ENCODE measurements at regions of chr12 and their contacts with region 1.

Region 1: DNA sequence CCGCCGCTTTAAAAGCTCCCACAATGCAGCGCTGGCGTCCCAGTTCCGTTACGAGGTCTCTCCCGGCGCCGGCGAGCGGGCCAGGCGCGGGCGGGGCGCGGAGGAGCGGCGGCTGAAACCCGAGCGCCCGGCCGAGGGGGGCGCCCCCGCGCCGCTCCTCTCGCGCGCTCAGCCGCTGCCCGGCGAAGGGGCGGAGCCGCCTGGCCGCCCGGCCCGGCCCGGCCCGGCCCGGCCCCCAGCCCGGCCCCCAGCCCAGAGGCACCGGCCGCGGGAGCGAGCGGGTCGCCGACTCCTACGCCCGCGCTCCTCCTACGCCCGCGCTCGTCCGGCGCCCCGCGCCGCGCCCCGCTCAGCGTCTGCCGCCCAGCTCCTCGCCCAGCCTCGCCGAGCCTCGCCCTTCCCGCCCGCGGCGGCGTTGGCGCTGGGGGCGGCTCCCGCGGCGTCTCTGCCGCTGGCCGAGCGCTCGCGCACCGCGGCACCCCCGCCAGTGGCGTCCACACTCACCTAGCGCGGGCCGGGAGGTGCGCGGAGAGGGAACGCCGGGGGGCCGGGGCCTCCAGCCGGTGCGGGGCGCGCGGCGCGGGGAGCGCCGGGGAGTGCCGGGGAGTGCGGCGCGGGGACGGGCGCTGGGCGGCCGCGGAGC is at the start of gene RASSF8:
- DNase-seq: peak; percentile 74
- H3K4me3 ChIP-seq: peak within 1 kb of the TSS; percentile 95 to 100 (median 100)
- H3K27ac ChIP-seq: peak within 1 kb of the TSS; percentile 95
- H3K4me1 ChIP-seq: peaks cover 20% of the 10 kb centered on the region
- H3K27me3 ChIP-seq: no peaks in the 10 kb centered on the region
- CTCF ChIP-seq: no peak
- POLR2A ChIP-seq: peak; percentile 4
- total RNA-seq, gene RASSF8: 58.3 and 59.3 TPM in 2 replicates

Region 2: DNA sequence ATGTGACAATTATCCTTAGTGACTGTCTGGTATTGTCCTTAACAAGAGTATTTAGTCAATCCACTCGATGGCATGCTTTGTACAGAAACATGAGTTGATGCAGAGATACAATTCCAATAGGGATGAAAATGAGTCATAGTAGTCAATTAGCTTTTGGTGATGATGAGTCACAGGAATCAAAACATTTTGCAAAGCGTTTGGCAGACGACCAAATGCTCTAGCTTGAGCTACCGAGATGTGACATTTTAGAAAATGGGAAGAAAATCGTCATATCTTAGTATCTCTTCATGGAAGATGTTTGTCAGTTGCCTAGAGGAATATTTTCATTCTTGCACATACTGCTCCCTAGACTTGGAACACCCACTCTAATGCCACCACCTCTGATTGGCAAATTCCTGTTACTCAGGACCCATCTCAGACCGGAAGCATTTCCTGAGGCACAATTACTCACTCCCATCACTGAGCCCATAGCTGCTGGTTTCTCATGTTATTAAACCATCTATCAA is 500.4 kb before region 1 on chr12:
- CTCF ChIA-PET with region 1: interaction called, 4 read pairs
- POLR2A ChIA-PET with region 1: no interaction called
- dilution Hi-C with region 1: no loop called
- intact Hi-C with region 1: loop called (anchors 1 kb)
- DNase-seq: peak; percentile 91
- H3K4me3 ChIP-seq: no peak overlapping the region
- H3K27ac ChIP-seq: peak overlapping the region; percentile 32
- H3K4me1 ChIP-seq: peaks cover 19% of the 10 kb centered on the region
- H3K27me3 ChIP-seq: no peaks in the 10 kb centered on the region
- CTCF ChIP-seq: no peak
- POLR2A ChIP-seq: no peak

Region 3: DNA sequence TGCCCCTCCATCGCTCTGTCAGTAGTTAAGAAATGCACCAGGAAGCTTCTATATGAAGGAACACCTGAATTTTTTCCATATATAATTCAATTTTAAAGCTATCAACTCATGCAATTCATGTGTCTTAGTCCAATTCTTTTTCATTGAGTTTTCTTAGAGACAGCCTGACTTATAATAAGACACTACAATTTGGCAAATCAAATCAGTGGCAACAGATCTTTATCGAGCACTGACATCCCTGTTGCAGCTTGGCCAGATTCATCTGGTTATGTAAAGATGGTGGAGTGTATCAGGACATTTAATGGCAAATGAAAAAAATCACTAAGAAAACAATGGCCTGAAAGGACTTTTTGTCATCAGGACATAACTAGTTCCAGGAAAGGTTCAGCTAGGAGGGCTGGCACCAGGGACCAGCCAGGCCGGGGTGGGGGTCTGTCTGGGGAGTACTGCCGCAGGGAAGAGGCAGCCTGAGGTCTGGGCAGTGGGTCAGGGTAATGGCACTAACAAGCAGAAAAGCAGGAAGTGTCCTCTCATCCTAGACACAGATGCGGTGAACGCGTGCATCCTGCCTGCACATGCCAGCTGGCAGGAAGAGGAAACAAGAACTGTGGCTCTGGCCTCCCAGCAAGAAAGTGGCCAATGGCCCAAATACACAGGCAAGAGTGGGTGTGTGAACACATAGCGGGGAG is 304.9 kb before region 1 on chr12:
- CTCF ChIA-PET with region 1: no interaction called
- POLR2A ChIA-PET with region 1: no interaction called
- dilution Hi-C with region 1: no loop called
- intact Hi-C with region 1: loop called (anchors 5 kb)
- DNase-seq: peak; percentile 63
- H3K4me3 ChIP-seq: no peak overlapping the region
- H3K27ac ChIP-seq: no peak overlapping the region
- H3K4me1 ChIP-seq: peaks cover 12% of the 10 kb centered on the region
- H3K27me3 ChIP-seq: no peaks in the 10 kb centered on the region
- CTCF ChIP-seq: no peak
- POLR2A ChIP-seq: no peak

Region 4: DNA sequence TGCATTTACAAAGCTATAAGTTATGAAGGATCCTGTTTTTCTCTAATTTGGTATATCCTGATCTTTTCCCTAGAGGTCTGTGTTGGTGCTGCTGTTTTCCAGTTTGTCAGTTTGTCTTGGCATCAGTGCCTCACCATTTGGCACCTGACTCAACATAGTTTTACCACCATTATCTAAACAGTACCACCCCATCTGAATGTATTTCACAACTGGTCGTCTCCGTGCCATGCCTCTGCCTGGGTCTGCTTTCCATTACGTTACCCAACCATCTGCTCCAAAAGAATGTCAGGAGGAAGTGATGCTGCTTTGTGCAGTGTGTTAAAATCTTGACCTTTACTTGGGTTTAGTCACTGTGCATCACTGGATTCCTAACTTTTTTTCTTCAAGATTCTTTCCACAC is 129.4 kb before region 1 on chr12:
- CTCF ChIA-PET with region 1: no interaction called
- POLR2A ChIA-PET with region 1: no interaction called
- dilution Hi-C with region 1: no loop called
- intact Hi-C with region 1: loop called (anchors 1 kb)
- DNase-seq: peak; percentile 97
- H3K4me3 ChIP-seq: no peak overlapping the region
- H3K27ac ChIP-seq: peak overlapping the region; percentile 80
- H3K4me1 ChIP-seq: peaks cover 15% of the 10 kb centered on the region
- H3K27me3 ChIP-seq: no peaks in the 10 kb centered on the region
- CTCF ChIP-seq: no peak
- POLR2A ChIP-seq: no peak

Region 5: GRCh38 chr12:25970916-25971653 is 12.5 kb after region 1 on chr12:
- CTCF ChIA-PET with region 1: interaction called, 15 read pairs
- POLR2A ChIA-PET with region 1: interaction called, 3 read pairs
- dilution Hi-C with region 1: no loop called
- intact Hi-C with region 1: no loop called
- DNase-seq: peak; percentile 25
- H3K4me3 ChIP-seq: no peak overlapping the region
- H3K27ac ChIP-seq: no peak overlapping the region
- H3K4me1 ChIP-seq: peaks cover 34% of the 10 kb centered on the region
- H3K27me3 ChIP-seq: no peaks in the 10 kb centered on the region
- CTCF ChIP-seq: peak in 1 of 2 donors; percentile 8
- POLR2A ChIP-seq: no peak

Region 6: DNA sequence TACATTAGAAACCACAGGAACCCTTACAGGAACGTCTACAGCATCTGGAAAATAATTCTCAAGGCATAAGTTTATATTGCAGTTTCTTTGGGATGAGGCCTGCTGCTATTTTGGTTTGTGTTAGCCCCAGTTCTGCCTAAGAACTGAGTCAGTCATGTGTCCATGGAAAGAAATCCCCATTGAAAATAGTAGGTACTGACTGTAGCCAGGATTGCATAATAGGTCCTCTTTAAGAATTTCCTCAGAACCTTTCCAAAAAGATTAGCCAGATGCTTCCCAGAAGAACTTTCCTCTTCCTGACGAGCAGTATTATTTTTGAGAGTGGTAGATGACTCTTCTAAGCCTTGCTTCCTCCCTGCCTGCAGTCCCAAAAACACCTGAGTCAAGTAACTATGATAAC is 52.5 kb after region 1 on chr12:
- CTCF ChIA-PET with region 1: interaction called, 52 read pairs
- POLR2A ChIA-PET with region 1: interaction called, 8 read pairs
- dilution Hi-C with region 1: no loop called
- intact Hi-C with region 1: no loop called
- DNase-seq: no peak
- H3K4me3 ChIP-seq: no peak overlapping the region
- H3K27ac ChIP-seq: peak overlapping the region; percentile 45
- H3K4me1 ChIP-seq: peaks cover 22% of the 10 kb centered on the region
- H3K27me3 ChIP-seq: no peaks in the 10 kb centered on the region
- CTCF ChIP-seq: no peak
- POLR2A ChIP-seq: no peak